ENCODE measurements at regions of chr2 and their contacts with region 1.

Region 1: DNA sequence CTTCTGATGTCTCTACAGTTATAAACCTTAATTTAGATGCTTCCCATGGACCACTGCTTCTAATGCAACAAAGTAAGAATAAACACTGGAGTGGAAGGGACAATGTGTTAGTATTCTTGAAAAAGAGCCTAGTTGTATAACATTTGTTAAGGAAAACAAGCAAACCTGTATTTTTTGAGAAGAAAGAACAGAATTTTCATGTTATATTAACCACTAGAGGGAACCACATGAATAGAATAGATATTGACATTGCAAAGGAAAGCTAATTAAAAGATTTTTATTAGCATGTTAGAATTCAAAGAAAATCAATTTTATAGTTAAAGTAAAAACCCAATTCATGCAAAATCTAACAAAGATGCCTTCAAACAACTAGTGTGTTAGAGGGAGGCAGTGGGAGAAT is 151.2 kb upstream of the BARD1 start:
- ATAC-seq: no peak
- H3K4me3 ChIP-seq: no peak overlapping the region
- H3K27ac ChIP-seq: no peak overlapping the region
- H3K4me1 ChIP-seq: no peaks in the 10 kb centered on the region

Region 2: GRCh38 chr2:214410918-214411554 is 549.6 kb before region 1 on chr2 and contains the start of gene VWC2L:
- in situ Hi-C with region 1: no loop called
- ATAC-seq: peak; percentile 84 to 99 (median 98)
- H3K4me3 ChIP-seq: peak within 1 kb of the TSS; percentile 22 to 39 (median 25)
- H3K27ac ChIP-seq: no peak within 1 kb of the TSS
- H3K4me1 ChIP-seq: no peaks in the 10 kb centered on the region
- total RNA-seq, gene VWC2L: 0.25 to 1.4 (median 0.64) TPM in 7 of 8 experiments, not detected in the other

Region 3: DNA sequence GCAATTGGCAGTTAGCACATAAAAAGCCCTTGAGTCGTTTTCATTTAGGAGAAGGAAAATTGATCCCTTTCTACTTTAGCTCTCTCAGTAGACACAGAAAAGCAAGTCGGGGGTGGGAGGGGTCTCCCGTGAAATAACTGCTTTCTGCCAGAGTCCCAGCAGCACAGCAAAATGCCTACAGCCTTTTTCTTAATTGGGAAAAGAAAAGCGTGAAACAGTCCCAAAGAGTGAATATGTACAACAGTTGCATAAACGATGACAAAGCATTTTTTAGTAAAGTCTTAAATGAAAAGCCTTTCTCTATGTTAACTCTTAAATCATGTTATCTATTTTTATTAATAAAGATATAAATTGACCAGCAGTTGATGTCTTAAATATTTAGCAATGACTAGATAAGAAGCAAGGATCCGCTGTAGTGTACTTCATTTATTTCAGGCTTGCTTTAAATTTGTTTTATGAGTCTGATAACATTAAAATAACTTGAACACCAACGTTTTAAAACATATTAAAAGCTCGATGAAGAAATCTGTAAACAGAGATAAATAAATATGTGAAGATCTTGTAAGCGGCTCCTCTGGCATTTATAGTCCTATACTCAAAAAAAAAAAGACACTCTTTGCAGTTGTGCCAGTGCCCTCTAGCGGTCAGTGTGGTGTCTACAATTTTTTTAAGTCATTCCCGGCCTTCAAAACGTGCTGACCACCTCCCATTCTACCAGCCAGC is 308.9 kb after region 1 on chr2:
- in situ Hi-C with region 1: loop called in 1 of 9 experiments (anchors 25 kb)
- ATAC-seq: peak in 7 of 8 experiments; percentile 38 to 74 (median 54)
- H3K4me3 ChIP-seq: no peak overlapping the region
- H3K27ac ChIP-seq: no peak overlapping the region
- H3K4me1 ChIP-seq: peaks cover 4 to 5% of the 10 kb centered on the region in 2 donors

Measured in motor neuron (in vitro differentiated cells).